ENCODE measurements at regions of chr7 and their contacts with region 1.

Region 1: GRCh38 chr7:76291343-76292212 is 10.9 kb upstream of the HSPB1 start:
- DNase-seq: peak; percentile 91 to 99
- H3K4me3 ChIP-seq: peak overlapping the region in 1 of 4 experiments; percentile 23; a peak in 1 of 8 replicates
- H3K27ac ChIP-seq: peak overlapping the region; percentile 53; the same call in 1 of the 2 replicates
- H3K4me1 ChIP-seq: peaks cover 0 to 22% (median 11%) of the 10 kb centered on the region in 4 experiments; a peak in 6 of 7 replicates
- H3K27me3 ChIP-seq: no peaks in the 10 kb centered on the region
- CTCF ChIP-seq: peak; percentile 94 to 99 (median 95)
- EP300 ChIP-seq: peak in 1 of 2 experiments; percentile 34; a peak in 1 of 3 replicates
- POLR2A ChIP-seq: no peak
- RAD21 ChIP-seq: peak; percentile 89 to 92

Region 2: DNA sequence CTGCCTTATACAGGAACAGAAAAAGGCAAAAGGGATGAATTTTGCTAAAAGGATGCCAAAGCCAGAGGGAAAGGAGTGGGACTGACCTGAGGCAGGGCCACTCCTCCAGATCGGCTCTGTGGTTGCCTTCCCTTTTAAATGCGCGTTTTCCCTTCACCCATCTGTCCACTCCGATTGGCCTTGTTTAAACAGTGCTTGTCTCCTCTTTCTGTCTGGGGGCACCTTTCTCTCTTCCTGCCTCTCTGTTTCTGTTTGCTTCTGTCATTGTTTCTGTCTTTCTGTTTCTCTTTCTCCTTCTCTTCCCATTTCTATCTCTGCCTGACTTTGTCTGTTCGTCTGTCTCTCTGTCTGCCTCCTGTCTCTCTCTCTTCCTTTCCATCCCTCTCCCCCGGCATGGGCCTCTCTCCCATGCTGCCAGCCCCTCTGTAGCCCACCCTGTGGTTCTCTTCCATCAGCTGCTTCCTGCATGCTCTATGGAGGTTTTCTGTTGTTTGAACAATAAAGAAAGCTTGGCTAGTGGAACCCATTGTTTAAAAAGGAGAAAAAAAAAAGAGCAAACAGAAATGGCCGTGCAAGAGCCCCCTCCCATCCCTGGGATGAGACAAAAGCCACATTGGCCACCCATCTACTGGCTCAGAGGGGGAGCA is 18.6 kb before region 1 on chr7:
- CTCF ChIA-PET with region 1: interaction called, 14 read pairs
- POLR2A ChIA-PET with region 1: interaction called, 7 read pairs
- DNase-seq: no peak
- H3K4me3 ChIP-seq: peak overlapping the region in 1 of 4 experiments; percentile 33; a peak in 3 of 8 replicates
- H3K27ac ChIP-seq: no peak overlapping the region
- H3K4me1 ChIP-seq: peaks cover 7 to 27% (median 16%) of the 10 kb centered on the region in 4 experiments
- H3K27me3 ChIP-seq: peaks cover 0 to 7% (median 0%) of the 10 kb centered on the region in 4 experiments; a peak in 2 of 7 replicates
- CTCF ChIP-seq: no peak
- EP300 ChIP-seq: no peak
- POLR2A ChIP-seq: no peak
- RAD21 ChIP-seq: no peak

Region 3: DNA sequence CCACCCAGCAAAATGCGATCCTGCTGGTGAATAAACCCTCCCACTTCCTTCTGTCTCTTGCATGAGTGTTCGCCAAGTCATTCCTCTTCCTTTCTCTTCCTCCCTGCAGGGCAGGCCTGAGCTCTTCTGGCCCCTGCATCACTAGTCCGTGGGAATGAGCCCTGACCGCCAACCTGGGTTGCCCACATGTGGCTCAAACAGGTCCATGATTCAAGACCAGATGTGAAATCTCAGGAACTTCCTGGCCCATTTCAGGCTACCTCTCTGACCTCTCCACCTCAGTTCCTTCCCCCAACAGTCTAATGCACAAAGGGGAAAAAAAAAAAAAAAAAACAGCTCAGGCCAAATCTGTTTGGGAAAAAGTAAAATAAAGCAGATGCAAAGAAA is 72.6 kb after region 1 on chr7:
- CTCF ChIA-PET with region 1: no interaction called
- POLR2A ChIA-PET with region 1: no interaction called
- DNase-seq: no peak
- H3K4me3 ChIP-seq: no peak overlapping the region
- H3K27ac ChIP-seq: no peak overlapping the region
- H3K4me1 ChIP-seq: peaks cover 9 to 13% (median 9%) of the 10 kb centered on the region in 4 experiments
- H3K27me3 ChIP-seq: no peaks in the 10 kb centered on the region
- CTCF ChIP-seq: no peak
- EP300 ChIP-seq: no peak
- POLR2A ChIP-seq: no peak
- RAD21 ChIP-seq: no peak

Measured in H1 (cell line).